Panc1 (cell line): ENCODE measurements at regions of chr11 and their contacts with region 1.

Region 1: DNA sequence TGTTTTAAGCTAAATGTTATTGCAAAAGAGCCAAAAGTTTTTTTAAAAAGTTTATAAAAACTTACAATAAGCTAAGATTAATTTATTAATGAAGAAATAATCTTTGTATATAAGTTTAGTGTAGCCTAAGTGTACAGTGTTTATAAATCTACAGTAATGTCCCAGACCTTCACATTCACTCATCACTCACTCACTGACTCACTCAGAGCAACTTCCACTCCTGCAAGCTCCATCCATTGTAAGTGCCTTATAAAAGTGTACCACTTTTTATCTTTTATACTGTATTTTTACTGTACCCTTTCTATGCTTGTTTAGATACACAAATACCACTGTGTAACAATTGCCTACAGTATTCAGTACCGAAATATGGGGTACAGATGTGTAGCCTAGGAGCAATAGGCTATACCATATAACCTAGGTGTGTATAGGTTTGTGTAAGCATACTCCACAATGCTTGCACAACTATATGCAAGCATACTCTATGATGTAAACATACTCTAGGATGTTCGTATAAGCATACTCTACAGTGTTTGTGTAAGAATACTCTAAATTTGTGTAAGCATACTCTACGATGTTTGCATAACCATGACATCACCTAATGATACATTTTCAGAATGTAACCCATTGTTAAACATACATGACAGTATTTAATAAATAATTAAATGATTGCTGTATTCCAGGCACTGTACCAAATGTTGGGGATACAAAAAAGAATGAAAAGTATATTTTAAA is 953.0 kb downstream of the KCNA4 start:
- DNase-seq: no peak
- ATAC-seq: no peak
- H3K4me3 ChIP-seq: no peak overlapping the region
- H3K27ac ChIP-seq: no peak overlapping the region
- H3K4me1 ChIP-seq: no peaks in the 10 kb centered on the region
- H3K27me3 ChIP-seq: no peaks in the 10 kb centered on the region
- CTCF ChIP-seq: no peak

Region 2: DNA sequence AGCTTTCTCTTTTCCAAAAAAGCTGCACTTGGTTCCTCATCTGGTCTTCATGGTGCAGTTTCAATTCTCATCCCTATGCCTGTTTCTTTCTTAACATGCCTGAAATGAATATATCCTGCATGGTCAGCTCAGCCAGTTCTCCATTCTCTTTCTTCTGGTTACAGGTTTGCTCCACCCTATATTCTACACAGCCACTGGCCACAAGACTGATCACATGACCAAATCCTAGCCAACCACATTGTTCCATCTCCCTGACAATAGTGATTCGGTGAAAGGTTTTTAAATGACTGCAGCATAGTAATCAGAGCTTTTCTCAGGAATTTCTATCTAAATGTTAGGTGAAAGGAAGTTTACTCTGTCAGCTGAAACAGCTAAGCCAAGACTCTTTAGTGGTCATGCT is 64.2 kb before region 1 on chr11:
- CTCF ChIA-PET with region 1: no interaction called
- POLR2A ChIA-PET with region 1: interaction called, 15 read pairs
- in situ Hi-C with region 1: no loop called
- intact Hi-C with region 1: no loop called
- DNase-seq: no peak
- ATAC-seq: no peak
- H3K4me3 ChIP-seq: no peak overlapping the region
- H3K27ac ChIP-seq: no peak overlapping the region
- H3K4me1 ChIP-seq: no peaks in the 10 kb centered on the region
- H3K27me3 ChIP-seq: no peaks in the 10 kb centered on the region
- CTCF ChIP-seq: no peak

Region 3: DNA sequence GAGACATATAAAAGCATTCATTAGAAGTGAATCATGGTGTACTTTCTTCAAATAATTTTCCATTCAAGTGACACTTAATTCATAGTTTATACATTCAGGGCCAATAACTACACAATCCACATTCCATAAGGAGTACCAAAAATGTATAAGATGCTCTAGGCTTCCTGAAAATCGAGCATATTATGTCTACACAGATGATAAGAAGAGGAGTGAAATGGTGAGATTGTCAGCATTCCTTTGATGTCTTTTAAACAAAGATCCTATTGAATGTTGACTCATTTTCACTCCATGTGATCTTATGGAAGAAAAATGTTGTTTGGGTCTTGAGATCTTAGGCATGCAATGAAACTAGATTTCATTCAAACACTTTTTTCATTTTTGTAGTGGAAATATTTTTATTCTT is 109.9 kb after region 1 on chr11:
- CTCF ChIA-PET with region 1: no interaction called
- POLR2A ChIA-PET with region 1: no interaction called
- in situ Hi-C with region 1: no loop called
- intact Hi-C with region 1: no loop called
- DNase-seq: peak; percentile 22
- ATAC-seq: 0 out of 2 replicates have a peak, but pooled peaks have one; percentile 17
- H3K4me3 ChIP-seq: no peak overlapping the region
- H3K27ac ChIP-seq: no peak overlapping the region
- H3K4me1 ChIP-seq: no peaks in the 10 kb centered on the region
- H3K27me3 ChIP-seq: no peaks in the 10 kb centered on the region
- CTCF ChIP-seq: no peak